ENCODE measurements at regions of chr17 and their contacts with region 1.

Region 1: DNA sequence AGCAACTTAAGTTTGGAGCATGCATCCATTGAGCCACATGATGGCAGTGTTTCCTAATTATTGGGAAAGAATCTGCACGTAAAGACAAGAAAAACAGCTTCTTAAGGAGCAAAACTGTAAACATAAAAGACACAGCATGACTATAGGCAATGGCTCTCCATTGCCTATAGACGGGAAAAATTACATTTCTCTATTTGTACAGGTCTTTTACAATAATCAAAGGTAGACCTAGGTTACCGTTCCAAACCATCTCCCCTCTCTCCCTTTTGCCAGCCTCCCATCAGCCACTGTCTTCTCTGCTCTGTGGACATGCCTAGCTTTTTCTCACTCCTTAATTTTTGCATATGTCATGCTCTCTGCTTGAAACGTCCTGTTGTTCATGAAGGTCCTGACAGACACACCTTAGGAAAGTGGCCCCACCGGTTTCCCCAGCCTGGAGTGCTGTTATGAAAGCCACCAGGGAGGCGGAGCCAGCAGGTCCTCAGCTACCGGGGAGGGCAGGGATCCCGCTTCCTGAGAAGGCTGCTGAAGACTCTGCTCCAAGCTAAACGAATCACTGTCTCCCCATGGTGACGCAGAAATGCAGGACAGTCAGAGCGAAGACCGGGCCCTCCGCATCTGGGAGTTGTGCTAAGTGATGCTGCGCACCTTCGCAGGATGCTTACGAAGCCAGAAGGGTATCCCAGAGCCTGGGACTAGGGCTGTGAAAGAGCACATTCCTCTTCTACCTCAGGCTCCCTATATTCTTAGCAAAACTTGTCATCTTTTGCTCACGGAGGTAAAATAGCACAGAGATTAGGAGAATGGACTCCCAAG is 2.2 kb upstream of the SLC16A11 start:
- DNase-seq: peak; percentile 81 to 91 (median 86)
- ATAC-seq: peak; percentile 84 to 87 (median 84)
- H3K4me3 ChIP-seq: peak overlapping the region in 3 of 4 donors; percentile 0 to 32 (median 5)
- H3K27ac ChIP-seq: peak overlapping the region in 3 of 4 donors; percentile 40 to 90 (median 78)
- H3K4me1 ChIP-seq: peaks cover 0 to 19% (median 15%) of the 10 kb centered on the region in 3 donors
- H3K27me3 ChIP-seq: peaks cover 0 to 4% (median 0%) of the 10 kb centered on the region in 4 donors
- CTCF ChIP-seq: peak; percentile 48 to 77 (median 58)

Region 2: GRCh38 chr17:7095625-7096024 is 49.5 kb after region 1 on chr17:
- intact Hi-C with region 1: no loop called
- DNase-seq: no peak
- ATAC-seq: peak in 2 of 4 donors; percentile 44
- H3K4me3 ChIP-seq: no peak overlapping the region
- H3K27ac ChIP-seq: no peak overlapping the region
- H3K4me1 ChIP-seq: no peaks in the 10 kb centered on the region
- H3K27me3 ChIP-seq: no peaks in the 10 kb centered on the region
- CTCF ChIP-seq: no peak

Region 3: DNA sequence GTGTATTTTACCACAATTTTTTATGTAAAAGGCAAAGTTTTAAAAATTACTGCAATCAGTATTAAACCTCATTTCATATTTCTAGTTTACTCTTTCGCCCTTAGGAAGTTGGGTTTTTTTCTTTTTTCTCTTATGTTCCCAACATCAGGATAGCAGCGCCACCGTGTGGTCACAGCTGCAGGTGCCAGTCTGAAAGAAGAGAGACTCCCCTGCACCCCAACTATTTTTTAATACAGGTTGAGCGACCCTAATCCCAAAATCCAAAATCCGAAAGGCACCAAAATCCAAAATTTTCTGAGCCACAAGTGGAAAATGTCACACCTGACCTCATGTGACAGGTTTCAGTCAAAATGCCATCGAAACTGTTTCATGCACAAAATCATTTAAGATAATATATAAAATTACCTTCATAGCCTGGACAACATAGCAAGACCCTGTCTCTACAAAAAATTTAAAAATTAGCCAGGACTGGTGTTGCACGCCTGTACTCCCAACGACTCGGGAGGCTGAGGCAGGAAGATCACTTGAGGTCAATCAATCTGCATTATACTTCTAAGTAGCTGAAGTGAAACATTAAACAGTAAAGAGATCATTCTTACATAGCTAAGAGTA is 90.3 kb after region 1 on chr17:
- intact Hi-C with region 1: loop called (anchors 5 kb)
- DNase-seq: peak; percentile 37 to 91 (median 72)
- ATAC-seq: peak in 3 of 4 donors; percentile 68 to 76 (median 69)
- H3K4me3 ChIP-seq: no peak overlapping the region
- H3K27ac ChIP-seq: no peak overlapping the region
- H3K4me1 ChIP-seq: no peaks in the 10 kb centered on the region
- H3K27me3 ChIP-seq: no peaks in the 10 kb centered on the region
- CTCF ChIP-seq: peak; percentile 75 to 87 (median 77)

Region 4: DNA sequence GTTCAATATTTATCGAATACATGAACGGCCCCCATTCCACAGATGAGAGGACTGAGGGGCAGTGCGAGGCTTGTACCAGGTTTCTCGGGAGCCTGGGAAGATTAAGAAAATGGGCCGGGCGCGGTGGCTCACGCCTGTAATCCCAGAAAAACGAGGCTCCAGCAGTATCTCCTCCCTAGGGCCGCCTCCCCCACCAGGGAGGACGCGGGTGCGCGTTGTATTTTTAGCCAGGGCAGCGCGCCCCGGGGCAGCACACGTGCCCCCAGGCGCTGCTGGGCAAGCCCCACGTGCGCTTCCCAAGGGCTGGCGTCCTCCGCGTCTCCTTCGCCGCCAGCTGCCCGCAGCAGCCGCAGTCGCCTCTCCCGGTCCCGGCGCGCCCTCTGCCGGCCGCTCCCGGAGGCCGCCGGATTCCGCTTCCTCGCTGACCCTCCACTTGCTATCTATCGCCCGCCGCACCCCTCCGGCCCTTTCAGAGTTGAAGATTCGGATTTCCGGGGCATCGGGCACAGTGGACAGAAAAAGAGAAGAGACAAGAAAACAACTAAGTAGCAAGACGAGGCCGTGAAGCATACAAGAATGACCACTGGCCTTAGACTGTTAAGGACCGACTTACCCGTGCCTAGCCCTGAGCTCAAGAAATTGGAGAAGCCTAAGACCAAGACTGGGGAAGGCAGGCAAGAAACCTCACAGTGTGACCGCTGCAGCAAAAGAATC is 250.2 kb after region 1 on chr17:
- intact Hi-C with region 1: loop called in 1 of 3 experiments (anchors 10 kb)
- DNase-seq: peak; percentile 69 to 95 (median 85)
- ATAC-seq: peak; percentile 67 to 86 (median 82)
- H3K4me3 ChIP-seq: peak overlapping the region in 1 of 4 donors; percentile 20
- H3K27ac ChIP-seq: no peak overlapping the region
- H3K4me1 ChIP-seq: peaks cover 0 to 18% (median 13%) of the 10 kb centered on the region in 3 donors
- H3K27me3 ChIP-seq: no peaks in the 10 kb centered on the region
- CTCF ChIP-seq: peak; percentile 84 to 90 (median 88)